Activated CD4-positive, alpha-beta T cell treated with anti-CD3 and anti-CD28 coated beads, Interleukin-2, amount 10 ng/mL, durations not matched to agents 7 days and 5 days (primary cell): ENCODE measurements at regions of chr19 and their contacts with region 1.

Region 1: DNA sequence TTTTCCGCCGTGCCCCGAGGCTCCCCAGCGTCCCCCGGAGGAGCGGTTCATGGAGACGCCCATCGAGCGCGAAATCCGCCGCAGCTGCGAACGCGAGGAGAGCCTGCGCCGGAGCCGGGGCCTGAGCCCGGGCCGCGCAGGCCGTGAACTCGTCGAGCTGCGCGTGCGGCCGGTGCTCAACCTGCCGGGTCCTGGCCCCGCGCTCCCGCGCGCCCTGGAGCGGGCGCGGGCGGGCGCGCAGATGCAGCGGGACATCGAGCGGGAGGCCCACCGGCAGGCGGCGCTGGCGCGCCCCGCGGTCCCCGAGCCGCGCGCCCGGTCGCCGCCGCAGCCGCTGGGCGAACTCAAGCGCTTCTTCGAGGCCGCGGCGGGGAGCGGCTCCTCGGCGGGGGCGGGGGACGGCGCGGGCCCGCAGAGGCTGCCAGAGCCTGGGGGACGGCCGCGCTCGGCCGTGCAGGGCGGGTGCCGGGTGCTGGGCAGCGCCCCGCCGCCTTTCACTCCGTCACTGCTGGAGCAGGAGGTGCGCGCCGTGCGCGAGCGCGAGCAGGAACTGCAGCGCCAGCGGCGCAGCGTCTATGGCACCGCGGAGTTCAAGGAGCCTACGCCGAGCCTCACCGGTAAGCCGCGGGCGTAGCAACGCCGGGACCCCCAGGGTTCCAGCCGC is 807 bp downstream of the MISP3 start:
- DNase-seq: peak; percentile 75
- H3K4me3 Mint-ChIP-seq: peak overlapping the region; percentile 84
- H3K27ac Mint-ChIP-seq: peak overlapping the region; percentile 48
- H3K4me1 Mint-ChIP-seq: peaks cover 30% of the 10 kb centered on the region
- H3K27me3 Mint-ChIP-seq: peaks cover 13% of the 10 kb centered on the region

Region 2: GRCh38 chr19:13880059-13881043 is 193.0 kb before region 1 on chr19:
- CTCF ChIA-PET with region 1: interaction called, 67 read pairs
- POLR2A ChIA-PET with region 1: no interaction called
- DNase-seq: peak; percentile 97
- H3K4me3 Mint-ChIP-seq: peak overlapping the region; percentile 30
- H3K27ac Mint-ChIP-seq: peak overlapping the region; percentile 76
- H3K4me1 Mint-ChIP-seq: peaks cover 44% of the 10 kb centered on the region
- H3K27me3 Mint-ChIP-seq: no peaks in the 10 kb centered on the region

Region 3: GRCh38 chr19:14048443-14049153 is 24.8 kb before region 1 on chr19:
- CTCF ChIA-PET with region 1: interaction called, 22 read pairs
- POLR2A ChIA-PET with region 1: no interaction called
- DNase-seq: peak; percentile 76
- H3K4me3 Mint-ChIP-seq: no peak overlapping the region
- H3K27ac Mint-ChIP-seq: no peak overlapping the region
- H3K4me1 Mint-ChIP-seq: peaks cover 4% of the 10 kb centered on the region
- H3K27me3 Mint-ChIP-seq: no peaks in the 10 kb centered on the region

Region 4: DNA sequence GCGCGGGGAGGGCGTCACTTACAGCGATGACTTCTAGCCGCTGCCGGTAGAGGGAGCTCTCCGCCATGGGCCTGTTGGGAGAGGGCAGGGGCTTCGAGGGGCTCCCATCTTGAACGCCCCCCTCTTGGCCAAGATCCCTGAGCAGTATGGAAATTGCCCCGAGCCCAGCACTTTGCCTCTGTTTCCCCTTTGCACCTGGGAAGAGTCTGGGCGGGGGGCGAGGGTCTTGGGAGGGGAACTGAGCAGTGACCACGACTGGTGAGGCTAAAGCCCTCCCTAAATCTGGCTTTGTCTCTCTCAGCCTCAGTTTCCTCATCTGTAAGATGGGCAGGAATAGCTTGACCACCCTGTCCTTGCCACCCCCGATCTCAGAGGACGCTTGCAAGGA is 14.3 kb before region 1 on chr19:
- CTCF ChIA-PET with region 1: interaction called, 82 read pairs
- POLR2A ChIA-PET with region 1: no interaction called
- DNase-seq: peak; percentile 58
- H3K4me3 Mint-ChIP-seq: no peak overlapping the region
- H3K27ac Mint-ChIP-seq: no peak overlapping the region
- H3K4me1 Mint-ChIP-seq: peaks cover 17% of the 10 kb centered on the region
- H3K27me3 Mint-ChIP-seq: peaks cover 41% of the 10 kb centered on the region

Region 5: DNA sequence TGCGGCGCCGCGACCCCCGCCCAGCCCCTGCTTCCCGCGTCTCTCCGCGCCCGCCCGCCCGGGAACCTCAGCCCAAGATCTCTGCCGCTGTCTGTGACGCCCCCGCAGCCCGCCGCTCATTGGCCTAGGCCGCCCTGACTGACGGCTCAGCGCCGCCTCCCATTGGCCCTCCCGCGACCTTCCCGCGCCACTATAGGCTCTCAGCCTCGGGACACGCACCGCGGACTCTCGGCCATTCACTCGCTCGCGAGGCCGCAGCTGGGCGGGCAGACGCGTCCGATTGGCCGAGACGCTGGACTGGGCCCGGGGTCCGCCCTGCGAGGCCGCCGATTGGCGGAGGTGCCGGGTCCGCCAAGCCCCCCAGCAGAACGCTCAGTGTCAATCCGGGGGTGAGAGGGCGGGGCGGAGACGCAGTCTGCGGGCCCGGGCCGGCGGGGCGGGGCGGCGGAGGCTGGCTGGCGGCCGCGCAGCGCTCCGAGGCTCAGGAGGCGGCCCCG is 44.3 kb after region 1 on chr19 and contains the start of gene PRKACA:
- CTCF ChIA-PET with region 1: interaction called, 15 read pairs
- POLR2A ChIA-PET with region 1: interaction called, 3 read pairs
- DNase-seq: peak; percentile 98
- H3K4me3 Mint-ChIP-seq: peak within 1 kb of the TSS; percentile 90
- H3K27ac Mint-ChIP-seq: peak within 1 kb of the TSS; percentile 85
- H3K4me1 Mint-ChIP-seq: peaks cover 48% of the 10 kb centered on the region
- H3K27me3 Mint-ChIP-seq: no peaks in the 10 kb centered on the region
- total RNA-seq, gene PRKACA: 50.6 to 56.8 TPM

Region 6: GRCh38 chr19:14147797-14148605 is 74.6 kb after region 1 on chr19:
- CTCF ChIA-PET with region 1: no interaction called
- POLR2A ChIA-PET with region 1: no interaction called
- DNase-seq: peak; percentile 51
- H3K4me3 Mint-ChIP-seq: peak overlapping the region; percentile 77
- H3K27ac Mint-ChIP-seq: peak overlapping the region; percentile 98
- H3K4me1 Mint-ChIP-seq: peaks cover 48% of the 10 kb centered on the region
- H3K27me3 Mint-ChIP-seq: no peaks in the 10 kb centered on the region